ENCODE measurements at regions of chr3 and their contacts with region 1.

Region 1: GRCh38 chr3:4978204-4978965 is 852 bp upstream of the BHLHE40 start:
- DNase-seq: peak; percentile 98
- H3K4me3 Mint-ChIP-seq: peak overlapping the region; percentile 76
- H3K27ac Mint-ChIP-seq: peak overlapping the region; percentile 96
- H3K4me1 Mint-ChIP-seq: peaks cover 12% of the 10 kb centered on the region
- H3K27me3 Mint-ChIP-seq: no peaks in the 10 kb centered on the region
- CTCF ChIP-seq: no peak

Region 2: GRCh38 chr3:4615750-4616149 is 362.6 kb before region 1 on chr3:
- CTCF ChIA-PET with region 1: no interaction called
- intact Hi-C with region 1: no loop called
- DNase-seq: no peak
- H3K4me3 Mint-ChIP-seq: no peak overlapping the region
- H3K27ac Mint-ChIP-seq: no peak overlapping the region
- H3K4me1 Mint-ChIP-seq: no peaks in the 10 kb centered on the region
- H3K27me3 Mint-ChIP-seq: peaks cover 15% of the 10 kb centered on the region
- CTCF ChIP-seq: no peak

Region 3: GRCh38 chr3:4722103-4722502 is 256.3 kb before region 1 on chr3:
- CTCF ChIA-PET with region 1: interaction called, 44 read pairs
- intact Hi-C with region 1: loop called (anchors 1 kb)
- DNase-seq: peak; percentile 53
- H3K4me3 Mint-ChIP-seq: no peak overlapping the region
- H3K27ac Mint-ChIP-seq: peak overlapping the region; percentile 10
- H3K4me1 Mint-ChIP-seq: peaks cover 25% of the 10 kb centered on the region
- H3K27me3 Mint-ChIP-seq: no peaks in the 10 kb centered on the region
- CTCF ChIP-seq: peak; percentile 20

Region 4: DNA sequence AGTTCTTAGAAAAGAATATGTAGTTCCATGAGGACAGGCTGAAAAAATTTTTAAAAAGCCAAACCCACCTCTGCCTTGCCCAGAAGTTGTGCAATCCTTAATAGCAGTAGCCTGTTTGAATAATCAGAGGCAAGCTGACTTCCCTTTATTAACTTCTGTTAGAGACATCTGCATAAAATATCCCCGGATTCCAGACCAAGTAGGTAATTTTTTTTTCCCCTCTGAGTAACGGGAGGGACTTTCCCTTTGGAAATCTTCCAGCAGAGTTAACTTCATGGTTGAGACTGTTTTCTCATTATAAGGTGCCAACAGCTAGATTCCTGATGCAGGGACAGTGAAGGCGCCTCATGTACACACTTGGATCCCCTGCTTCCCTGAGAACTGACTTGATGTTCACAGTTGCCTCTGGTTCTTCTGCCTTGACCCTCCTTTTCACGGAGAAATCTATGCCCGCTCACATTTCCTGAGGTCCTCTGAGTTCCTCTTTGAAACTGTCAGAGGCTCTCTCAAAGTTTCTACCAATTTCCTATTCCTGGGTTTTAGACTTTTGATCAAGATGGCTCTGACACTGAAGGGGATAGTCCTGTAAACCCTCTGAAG is 226.8 kb before region 1 on chr3:
- CTCF ChIA-PET with region 1: interaction called, 15 read pairs
- intact Hi-C with region 1: loop called (anchors 2 kb)
- DNase-seq: peak; percentile 42
- H3K4me3 Mint-ChIP-seq: peak overlapping the region; percentile 69
- H3K27ac Mint-ChIP-seq: peak overlapping the region; percentile 99
- H3K4me1 Mint-ChIP-seq: peaks cover 46% of the 10 kb centered on the region
- H3K27me3 Mint-ChIP-seq: no peaks in the 10 kb centered on the region
- CTCF ChIP-seq: no peak

Region 5: GRCh38 chr3:4906107-4906621 is 72.2 kb before region 1 on chr3:
- CTCF ChIA-PET with region 1: interaction called, 3 read pairs
- intact Hi-C with region 1: loop called (anchors 2 kb)
- DNase-seq: peak; percentile 41
- H3K4me3 Mint-ChIP-seq: no peak overlapping the region
- H3K27ac Mint-ChIP-seq: peak overlapping the region; percentile 33
- H3K4me1 Mint-ChIP-seq: peaks cover 21% of the 10 kb centered on the region
- H3K27me3 Mint-ChIP-seq: no peaks in the 10 kb centered on the region
- CTCF ChIP-seq: no peak